Kidney (tissue), 22 donors: ENCODE measurements at regions of chr4 and their contacts with region 1.

Region 1: GRCh38 chr4:3346146-3346545 is 53.3 kb downstream of the RGS12 start:
- DNase-seq: peak in 2 of 5 donors; percentile 79 to 90
- H3K4me3 ChIP-seq: no peak overlapping the region
- H3K27ac ChIP-seq: no peak overlapping the region
- H3K4me1 ChIP-seq: no peaks in the 10 kb centered on the region
- H3K27me3 ChIP-seq: no peaks in the 10 kb centered on the region
- CTCF ChIP-seq: peak; percentile 80

Region 2: GRCh38 chr4:3442959-3443749 is 97.0 kb after region 1 on chr4:
- intact Hi-C with region 1: loop called (anchors 10 kb)
- DNase-seq: peak; percentile 60 to 84 (median 72)
- H3K4me3 ChIP-seq: no peak overlapping the region
- H3K27ac ChIP-seq: no peak overlapping the region
- H3K4me1 ChIP-seq: peaks cover 0 to 2% (median 0%) of the 10 kb centered on the region in 3 donors
- H3K27me3 ChIP-seq: no peaks in the 10 kb centered on the region
- CTCF ChIP-seq: peak; percentile 97